ENCODE measurements at regions of chr19 and their contacts with region 1.

Region 1: DNA sequence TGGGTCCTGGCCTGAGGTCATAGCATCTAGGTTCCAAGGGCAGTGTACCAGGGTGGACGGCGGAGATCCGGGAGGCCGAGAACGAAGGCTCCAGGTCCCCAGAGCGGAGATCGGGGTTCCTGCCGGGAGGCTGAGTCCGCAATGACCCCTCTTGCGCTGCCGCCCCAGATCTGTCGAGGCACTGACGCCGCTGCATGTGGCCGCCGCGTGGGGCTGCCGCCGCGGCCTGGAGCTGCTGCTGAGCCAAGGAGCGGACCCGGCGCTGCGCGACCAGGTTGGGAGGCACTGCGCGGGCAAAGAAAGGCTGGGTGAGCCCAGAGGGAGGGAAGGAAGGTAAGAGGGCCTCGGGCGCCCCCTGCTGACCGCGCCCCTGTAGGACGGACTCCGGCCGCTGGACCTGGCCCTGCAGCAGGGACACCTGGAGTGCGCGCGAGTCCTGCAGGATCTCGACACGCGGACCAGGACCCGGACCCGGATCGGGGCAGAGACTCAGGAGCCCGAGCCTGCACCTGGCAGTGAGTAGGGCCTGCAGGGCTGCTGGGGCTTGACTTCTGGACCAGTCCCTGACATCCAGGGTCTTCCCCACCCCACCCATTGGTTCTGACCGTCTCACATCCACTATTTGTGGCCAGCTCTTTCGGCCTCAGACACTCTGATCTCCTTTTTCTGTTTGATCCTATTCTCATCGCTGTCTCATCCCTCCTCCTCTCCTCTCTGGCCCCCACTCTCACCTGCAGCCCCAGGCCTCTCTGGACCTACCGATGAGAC is 971 bp downstream of the ANKLE1 start:
- H3K4me3 Mint-ChIP-seq: peak overlapping the region; percentile 75
- H3K27ac Mint-ChIP-seq: peak overlapping the region; percentile 68
- H3K4me1 Mint-ChIP-seq: peaks cover 21% of the 10 kb centered on the region
- H3K27me3 Mint-ChIP-seq: peaks cover 6% of the 10 kb centered on the region

Region 2: DNA sequence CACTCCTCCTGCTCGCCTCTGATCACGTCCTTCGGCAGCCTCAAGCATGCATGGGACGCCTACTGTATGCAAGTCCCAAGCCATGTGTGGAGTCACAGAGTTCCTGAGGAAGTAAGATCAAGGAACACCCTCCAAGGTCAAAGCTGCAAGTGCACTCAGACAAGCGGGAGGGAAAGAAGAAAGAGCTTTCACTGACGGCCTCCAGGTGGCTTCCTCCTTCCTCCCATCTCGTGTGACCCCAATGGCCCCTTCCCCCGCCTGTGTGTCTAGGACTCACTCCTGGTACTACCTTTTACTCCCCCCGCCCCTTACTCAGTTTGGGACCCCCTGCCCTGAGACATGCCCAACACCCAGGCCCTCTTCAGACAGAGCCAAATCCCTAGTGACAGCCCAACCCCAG is 213.5 kb before region 1 on chr19:
- intact Hi-C with region 1: loop called (anchors 1 kb)
- H3K4me3 Mint-ChIP-seq: no peak overlapping the region
- H3K27ac Mint-ChIP-seq: peak overlapping the region; percentile 7
- H3K4me1 Mint-ChIP-seq: peaks cover 62% of the 10 kb centered on the region
- H3K27me3 Mint-ChIP-seq: no peaks in the 10 kb centered on the region

Region 3: GRCh38 chr19:17205237-17206140 is 77.2 kb before region 1 on chr19:
- intact Hi-C with region 1: loop called (anchors 5 kb)
- H3K4me3 Mint-ChIP-seq: no peak overlapping the region
- H3K27ac Mint-ChIP-seq: no peak overlapping the region
- H3K4me1 Mint-ChIP-seq: peaks cover 14% of the 10 kb centered on the region
- H3K27me3 Mint-ChIP-seq: no peaks in the 10 kb centered on the region

Region 4: GRCh38 chr19:17260842-17261325 is 21.8 kb before region 1 on chr19:
- intact Hi-C with region 1: loop called (anchors 2 kb)
- H3K4me3 Mint-ChIP-seq: no peak overlapping the region
- H3K27ac Mint-ChIP-seq: no peak overlapping the region
- H3K4me1 Mint-ChIP-seq: peaks cover 7% of the 10 kb centered on the region
- H3K27me3 Mint-ChIP-seq: peaks cover 16% of the 10 kb centered on the region

Region 5: DNA sequence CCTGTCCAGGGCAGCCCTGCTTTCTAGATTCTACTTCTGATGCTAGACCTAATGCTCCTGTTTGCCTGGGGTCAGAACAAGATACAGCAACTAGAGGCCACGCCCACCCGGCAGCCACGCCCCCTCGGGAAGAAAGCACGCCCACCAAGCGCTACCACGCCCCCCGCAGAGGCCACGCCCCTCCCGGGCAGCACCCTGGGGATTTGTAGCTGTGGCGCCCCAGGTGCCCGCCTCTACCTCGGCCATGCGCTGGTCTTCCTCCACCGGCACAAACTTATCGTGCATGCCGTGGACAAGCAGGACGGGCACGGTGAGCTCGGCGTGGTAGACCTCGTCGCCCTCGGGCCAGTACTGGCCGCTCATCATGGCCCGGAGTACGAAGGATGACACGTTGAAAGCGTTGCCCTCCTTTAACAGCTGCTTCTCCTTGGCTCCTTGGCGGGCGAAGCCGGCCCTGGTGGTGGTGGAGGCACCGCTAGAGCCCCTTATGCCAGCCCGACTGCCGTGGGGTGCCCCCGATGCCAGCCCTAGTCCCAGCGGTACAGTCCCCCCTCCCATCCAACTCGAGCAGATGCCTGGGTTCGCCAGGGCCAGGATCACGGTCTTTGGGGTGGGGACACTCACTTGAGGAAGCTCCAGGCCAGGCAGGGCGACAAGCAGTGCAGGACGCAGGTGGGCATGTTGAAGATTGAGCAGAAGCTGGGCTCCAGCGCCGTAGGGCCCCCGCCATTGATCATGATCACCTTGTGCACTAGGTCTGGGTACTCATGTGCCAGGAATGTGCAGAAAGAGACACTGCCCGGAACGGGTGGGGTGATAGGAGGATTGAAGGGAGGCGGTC is 11.6 kb after region 1 on chr19:
- intact Hi-C with region 1: no loop called
- H3K4me3 Mint-ChIP-seq: no peak overlapping the region
- H3K27ac Mint-ChIP-seq: no peak overlapping the region
- H3K4me1 Mint-ChIP-seq: peaks cover 17% of the 10 kb centered on the region
- H3K27me3 Mint-ChIP-seq: peaks cover 4% of the 10 kb centered on the region

Region 6: DNA sequence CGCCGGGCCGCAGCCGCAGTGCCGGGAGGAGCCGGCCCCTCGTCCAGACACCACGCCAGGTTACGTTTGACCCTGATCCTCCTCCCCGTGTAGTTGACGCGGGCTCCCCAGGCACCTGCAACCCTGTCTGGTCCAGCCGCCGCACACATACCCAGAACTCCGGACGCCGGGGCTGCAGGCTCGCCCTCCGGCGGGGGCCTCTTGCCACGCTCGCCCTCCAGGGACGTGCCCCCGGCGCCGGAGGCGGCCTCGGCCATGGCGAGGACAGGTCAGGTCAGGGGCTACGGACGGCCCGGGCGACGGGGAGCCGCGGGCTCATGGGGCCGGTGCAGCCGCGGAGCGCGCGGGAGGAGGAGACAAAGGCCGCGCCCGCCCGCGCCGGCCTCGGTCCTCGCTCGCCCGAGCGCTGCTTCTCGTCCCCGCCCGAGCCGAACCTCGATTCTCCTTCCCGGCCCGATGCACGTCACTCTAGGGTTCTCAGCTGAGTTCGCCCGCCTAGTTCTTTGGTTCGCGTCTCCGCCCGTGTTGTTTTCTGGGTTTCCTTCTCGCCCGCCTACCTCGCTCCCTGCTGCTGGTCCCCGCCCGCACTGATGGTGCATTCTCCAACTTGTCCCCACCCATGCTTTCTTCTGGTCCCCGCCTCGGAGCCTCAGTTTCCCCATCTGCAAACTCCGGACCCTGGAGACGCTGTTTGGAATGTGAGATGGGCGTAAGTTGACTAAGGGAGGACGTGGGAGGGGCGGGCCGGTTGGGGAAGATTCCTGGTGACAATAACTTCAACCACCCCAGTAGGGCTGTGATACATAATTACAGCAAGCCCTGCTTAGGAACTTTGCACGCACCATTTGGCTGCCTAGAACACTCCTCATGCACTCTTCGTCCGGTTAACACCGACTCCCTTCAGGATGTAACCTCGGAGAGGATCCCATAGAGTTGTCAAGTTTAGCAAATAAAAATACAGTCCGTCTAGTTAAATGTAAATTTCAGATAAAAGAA is 52.0 kb after region 1 on chr19 and contains the start of gene ANO8:
- intact Hi-C with region 1: no loop called
- H3K4me3 Mint-ChIP-seq: peak within 1 kb of the TSS; percentile 92
- H3K27ac Mint-ChIP-seq: peak within 1 kb of the TSS; percentile 86
- H3K4me1 Mint-ChIP-seq: peaks cover 67% of the 10 kb centered on the region
- H3K27me3 Mint-ChIP-seq: peaks cover 18% of the 10 kb centered on the region